WTC11 (cell line): ENCODE measurements at regions of chr6 and their contacts with region 1.

Region 1: GRCh38 chr6:10555625-10556309 is 34.6 kb downstream of the GCNT2 start:
- DNase-seq: peak; percentile 67
- ATAC-seq: peak; percentile 64
- H3K4me3 Mint-ChIP-seq: peak overlapping the region; percentile 94
- H3K27ac Mint-ChIP-seq: peak overlapping the region; percentile 97
- H3K4me1 Mint-ChIP-seq: peaks cover 75% of the 10 kb centered on the region
- H3K27me3 Mint-ChIP-seq: no peaks in the 10 kb centered on the region
- CTCF ChIP-seq: no peak

Region 2: GRCh38 chr6:10510592-10511367 is 45.0 kb before region 1 on chr6:
- CTCF ChIA-PET with region 1: interaction called, 16 read pairs
- POLR2A ChIA-PET with region 1: no interaction called
- DNase-seq: peak; percentile 75
- ATAC-seq: peak; percentile 99
- H3K4me3 Mint-ChIP-seq: no peak overlapping the region
- H3K27ac Mint-ChIP-seq: no peak overlapping the region
- H3K4me1 Mint-ChIP-seq: peaks cover 18% of the 10 kb centered on the region
- H3K27me3 Mint-ChIP-seq: no peaks in the 10 kb centered on the region
- CTCF ChIP-seq: 0 out of 2 replicates have a peak, but pooled peaks have one; percentile 31

Region 3: GRCh38 chr6:10521104-10521808 is 34.5 kb before region 1 on chr6 and contains the start of gene GCNT2:
- CTCF ChIA-PET with region 1: interaction called, 10 read pairs
- POLR2A ChIA-PET with region 1: interaction called, 10 read pairs
- DNase-seq: peak; percentile 63
- ATAC-seq: peak; percentile 85
- H3K4me3 Mint-ChIP-seq: peak within 1 kb of the TSS; percentile 51
- H3K27ac Mint-ChIP-seq: peak within 1 kb of the TSS; percentile 99
- H3K4me1 Mint-ChIP-seq: peaks cover 62% of the 10 kb centered on the region
- H3K27me3 Mint-ChIP-seq: no peaks in the 10 kb centered on the region
- CTCF ChIP-seq: no peak
- total RNA-seq, gene GCNT2: 51.2 to 66.7 TPM (median 62.7 TPM) in 3 replicates

Region 4: GRCh38 chr6:10545482-10545881 is 10.3 kb before region 1 on chr6:
- CTCF ChIA-PET with region 1: interaction called, 10 read pairs
- POLR2A ChIA-PET with region 1: interaction called, 19 read pairs
- DNase-seq: no peak
- ATAC-seq: peak; percentile 44
- H3K4me3 Mint-ChIP-seq: no peak overlapping the region
- H3K27ac Mint-ChIP-seq: peak overlapping the region; percentile 54
- H3K4me1 Mint-ChIP-seq: peaks cover 29% of the 10 kb centered on the region
- H3K27me3 Mint-ChIP-seq: no peaks in the 10 kb centered on the region
- CTCF ChIP-seq: no peak

Region 5: GRCh38 chr6:10585209-10585845 is 29.6 kb after region 1 on chr6:
- CTCF ChIA-PET with region 1: interaction called, 4 read pairs
- POLR2A ChIA-PET with region 1: interaction called, 15 read pairs
- DNase-seq: peak; percentile 77
- ATAC-seq: peak; percentile 83
- H3K4me3 Mint-ChIP-seq: no peak overlapping the region
- H3K27ac Mint-ChIP-seq: peak overlapping the region; percentile 99
- H3K4me1 Mint-ChIP-seq: peaks cover 55% of the 10 kb centered on the region
- H3K27me3 Mint-ChIP-seq: no peaks in the 10 kb centered on the region
- CTCF ChIP-seq: no peak

Region 6: GRCh38 chr6:10621213-10621612 is 65.4 kb after region 1 on chr6:
- CTCF ChIA-PET with region 1: interaction called, 11 read pairs
- POLR2A ChIA-PET with region 1: interaction called, 3 read pairs
- DNase-seq: no peak
- ATAC-seq: no peak
- H3K4me3 Mint-ChIP-seq: no peak overlapping the region
- H3K27ac Mint-ChIP-seq: peak overlapping the region; percentile 20
- H3K4me1 Mint-ChIP-seq: no peaks in the 10 kb centered on the region
- H3K27me3 Mint-ChIP-seq: no peaks in the 10 kb centered on the region
- CTCF ChIP-seq: no peak